ENCODE measurements at regions of chr12 and their contacts with region 1.

Region 1: GRCh38 chr12:93502802-93503623 is 35.7 kb downstream of the MRPL42 start:
- DNase-seq: peak; percentile 52
- H3K4me3 ChIP-seq: no peak overlapping the region
- H3K27ac ChIP-seq: no peak overlapping the region
- H3K4me1 ChIP-seq: no peaks in the 10 kb centered on the region
- H3K27me3 ChIP-seq: no peaks in the 10 kb centered on the region
- CTCF ChIP-seq: peak; percentile 76

Region 2: GRCh38 chr12:93677195-93678064 is 174.4 kb after region 1 on chr12 and contains the start of gene CRADD:
- intact Hi-C with region 1: no loop called
- DNase-seq: peak; percentile 84
- H3K4me3 ChIP-seq: peak within 1 kb of the TSS; percentile 52
- H3K27ac ChIP-seq: peak within 1 kb of the TSS; percentile 97
- H3K4me1 ChIP-seq: no peaks in the 10 kb centered on the region
- H3K27me3 ChIP-seq: no peaks in the 10 kb centered on the region
- CTCF ChIP-seq: no peak
- total RNA-seq, gene CRADD: 18.2 to 23.9 TPM

Region 3: GRCh38 chr12:93742110-93742934 is 239.3 kb after region 1 on chr12:
- intact Hi-C with region 1: loop called (anchors 10 kb)
- DNase-seq: peak; percentile 62
- H3K4me3 ChIP-seq: peak overlapping the region; percentile 56
- H3K27ac ChIP-seq: peak overlapping the region; percentile 84
- H3K4me1 ChIP-seq: no peaks in the 10 kb centered on the region
- H3K27me3 ChIP-seq: no peaks in the 10 kb centered on the region
- CTCF ChIP-seq: no peak

Region 4: GRCh38 chr12:93990832-93991803 is 488.1 kb after region 1 on chr12:
- intact Hi-C with region 1: loop called (anchors 5 kb)
- DNase-seq: peak; percentile 23
- H3K4me3 ChIP-seq: no peak overlapping the region
- H3K27ac ChIP-seq: no peak overlapping the region
- H3K4me1 ChIP-seq: no peaks in the 10 kb centered on the region
- H3K27me3 ChIP-seq: no peaks in the 10 kb centered on the region
- CTCF ChIP-seq: no peak

Region 5: GRCh38 chr12:94101738-94102660 is 599.0 kb after region 1 on chr12:
- intact Hi-C with region 1: loop called (anchors 5 kb)
- DNase-seq: peak; percentile 91
- H3K4me3 ChIP-seq: peak overlapping the region; percentile 53
- H3K27ac ChIP-seq: no peak overlapping the region
- H3K4me1 ChIP-seq: no peaks in the 10 kb centered on the region
- H3K27me3 ChIP-seq: no peaks in the 10 kb centered on the region
- CTCF ChIP-seq: peak; percentile 75

Measured in colonic mucosa (tissue), 4 donors.